Naive thymus-derived CD4-positive, alpha-beta T cell (primary cell): ENCODE measurements at regions of chr16 and their contacts with region 1.

Region 1: DNA sequence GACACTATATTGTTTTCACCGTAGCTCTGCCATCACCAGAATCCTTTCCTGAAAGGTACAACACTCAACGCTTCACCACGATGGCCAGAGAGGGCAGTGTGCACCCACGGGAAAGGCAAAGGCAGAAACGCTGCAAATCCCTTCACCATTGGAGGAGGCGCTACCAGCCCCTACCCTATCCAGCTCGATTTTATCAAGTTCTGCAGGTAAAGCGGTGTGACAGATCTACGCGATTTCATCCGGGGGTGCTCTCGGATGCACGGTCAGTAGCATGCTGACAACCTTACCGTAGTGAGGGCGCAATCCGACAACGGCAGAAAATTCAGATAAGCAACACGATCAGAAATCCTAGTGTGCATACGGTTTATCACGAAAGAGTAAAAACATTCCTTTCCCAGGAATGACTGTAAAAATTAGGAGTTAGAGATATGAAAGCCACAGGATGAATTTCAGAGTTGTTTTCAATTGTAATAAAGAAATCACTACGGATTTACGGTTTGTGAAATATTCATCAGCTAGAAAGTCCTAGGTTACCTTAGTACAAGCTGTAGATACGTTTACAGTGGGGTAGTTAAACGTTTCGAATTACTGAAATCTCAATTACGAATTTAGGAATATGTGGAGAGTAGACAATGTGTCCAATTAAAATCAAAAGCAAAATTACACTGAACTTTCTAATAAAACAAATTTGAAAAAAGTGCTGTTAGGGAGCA is 1.8 kb downstream of the NETO2 start:
- DNase-seq: peak; percentile 53 to 83 (median 75)
- ATAC-seq: peak; percentile 86
- H3K4me3 ChIP-seq: peak overlapping the region; percentile 30
- H3K4me3 Mint-ChIP-seq: peak overlapping the region; percentile 72 to 89 (median 84)
- H3K27ac ChIP-seq: no peak overlapping the region
- H3K27ac Mint-ChIP-seq: peak overlapping the region in 2 of 9 donors; percentile 14 to 77
- H3K4me1 ChIP-seq: peaks cover 10 to 15% of the 10 kb centered on the region in 2 donors
- H3K4me1 Mint-ChIP-seq: peaks cover 12 to 29% (median 17%) of the 10 kb centered on the region in 7 donors
- H3K27me3 ChIP-seq: peaks cover 0 to 12% of the 10 kb centered on the region in 2 donors
- H3K27me3 Mint-ChIP-seq: peaks cover 22 to 37% (median 34%) of the 10 kb centered on the region in 5 donors

Region 2: GRCh38 chr16:46830902-46831647 is 310.9 kb before region 1 on chr16 and contains the start of gene C16orf87:
- CTCF ChIA-PET with region 1: no interaction called
- POLR2A ChIA-PET with region 1: no interaction called
- intact Hi-C with region 1: loop called in 1 of 2 experiments (anchors 5 kb)
- DNase-seq: peak; percentile 88 to 95 (median 91)
- ATAC-seq: peak; percentile 96
- H3K4me3 ChIP-seq: peak within 1 kb of the TSS; percentile 46
- H3K4me3 Mint-ChIP-seq: peak within 1 kb of the TSS; percentile 94 to 99 (median 96)
- H3K27ac ChIP-seq: peak within 1 kb of the TSS; percentile 81
- H3K27ac Mint-ChIP-seq: peak within 1 kb of the TSS; percentile 90 to 98 (median 95)
- H3K4me1 ChIP-seq: peaks cover 9 to 12% of the 10 kb centered on the region in 2 donors
- H3K4me1 Mint-ChIP-seq: peaks cover 21 to 35% (median 29%) of the 10 kb centered on the region in 7 donors
- H3K27me3 ChIP-seq: no peaks in the 10 kb centered on the region
- H3K27me3 Mint-ChIP-seq: peaks cover 0 to 21% (median 0%) of the 10 kb centered on the region in 5 donors
- total RNA-seq, gene C16orf87: 5.6 to 14.0 (median 12.7) TPM

Region 3: GRCh38 chr16:46896314-46896968 is 245.5 kb before region 1 on chr16:
- CTCF ChIA-PET with region 1: no interaction called
- POLR2A ChIA-PET with region 1: no interaction called
- intact Hi-C with region 1: no loop called
- DNase-seq: no peak
- ATAC-seq: no peak
- H3K4me3 ChIP-seq: no peak overlapping the region
- H3K4me3 Mint-ChIP-seq: no peak overlapping the region
- H3K27ac ChIP-seq: no peak overlapping the region
- H3K27ac Mint-ChIP-seq: no peak overlapping the region
- H3K4me1 ChIP-seq: no peaks in the 10 kb centered on the region
- H3K4me1 Mint-ChIP-seq: peaks cover 0 to 3% (median 0%) of the 10 kb centered on the region in 7 donors
- H3K27me3 ChIP-seq: no peaks in the 10 kb centered on the region
- H3K27me3 Mint-ChIP-seq: peaks cover 0 to 4% (median 0%) of the 10 kb centered on the region in 5 donors

Region 4: GRCh38 chr16:47065766-47066688 is 75.9 kb before region 1 on chr16:
- CTCF ChIA-PET with region 1: no interaction called
- POLR2A ChIA-PET with region 1: no interaction called
- intact Hi-C with region 1: loop called in 1 of 2 experiments (anchors 5 kb)
- DNase-seq: no peak
- ATAC-seq: no peak
- H3K4me3 ChIP-seq: no peak overlapping the region
- H3K4me3 Mint-ChIP-seq: no peak overlapping the region
- H3K27ac ChIP-seq: no peak overlapping the region
- H3K27ac Mint-ChIP-seq: no peak overlapping the region
- H3K4me1 ChIP-seq: no peaks in the 10 kb centered on the region
- H3K4me1 Mint-ChIP-seq: peaks cover 0 to 16% (median 5%) of the 10 kb centered on the region in 7 donors
- H3K27me3 ChIP-seq: no peaks in the 10 kb centered on the region
- H3K27me3 Mint-ChIP-seq: peaks cover 0 to 10% (median 6%) of the 10 kb centered on the region in 5 donors

Region 5: DNA sequence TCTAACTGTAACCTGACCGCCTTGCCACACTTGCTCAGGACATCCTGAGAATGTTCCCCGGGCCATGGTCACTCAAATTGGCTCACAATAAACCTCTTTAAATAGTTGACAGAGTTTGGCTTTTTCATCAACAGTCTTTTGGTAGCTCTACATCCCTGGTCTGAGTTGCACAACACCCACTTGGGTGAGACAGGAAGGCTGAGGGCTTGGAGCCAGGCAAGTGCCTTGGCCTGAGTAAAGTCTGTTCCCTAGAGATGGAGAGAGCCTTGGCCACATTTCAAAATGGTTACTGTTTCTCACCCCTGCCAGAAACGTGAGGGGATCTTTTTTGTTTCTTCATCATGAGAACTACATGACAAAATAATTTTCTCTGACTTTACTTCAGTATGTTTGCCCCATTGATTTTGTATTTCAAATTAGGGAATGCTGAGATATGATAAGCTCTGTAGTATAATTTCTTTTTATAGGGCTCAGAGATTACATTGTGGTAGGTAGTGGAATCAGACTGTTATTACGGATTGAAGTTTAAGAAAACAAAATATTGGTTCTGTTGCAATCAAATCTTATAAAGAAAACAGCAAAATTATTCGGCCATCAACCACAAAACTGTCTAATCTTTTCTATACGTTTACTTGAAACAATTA is 55.7 kb after region 1 on chr16:
- CTCF ChIA-PET with region 1: no interaction called
- POLR2A ChIA-PET with region 1: no interaction called
- intact Hi-C with region 1: no loop called
- DNase-seq: no peak
- ATAC-seq: no peak
- H3K4me3 ChIP-seq: no peak overlapping the region
- H3K4me3 Mint-ChIP-seq: no peak overlapping the region
- H3K27ac ChIP-seq: no peak overlapping the region
- H3K27ac Mint-ChIP-seq: no peak overlapping the region
- H3K4me1 ChIP-seq: no peaks in the 10 kb centered on the region
- H3K4me1 Mint-ChIP-seq: peaks cover 0 to 2% (median 0%) of the 10 kb centered on the region in 7 donors
- H3K27me3 ChIP-seq: no peaks in the 10 kb centered on the region
- H3K27me3 Mint-ChIP-seq: no peaks in the 10 kb centered on the region

Region 6: GRCh38 chr16:47732523-47733111 is 590.7 kb after region 1 on chr16:
- CTCF ChIA-PET with region 1: interaction called, 3 read pairs
- POLR2A ChIA-PET with region 1: no interaction called
- intact Hi-C with region 1: loop called in 1 of 2 experiments (anchors 5 kb)
- DNase-seq: peak in 1 of 9 donors; percentile 28
- ATAC-seq: no peak
- H3K4me3 ChIP-seq: no peak overlapping the region
- H3K4me3 Mint-ChIP-seq: peak overlapping the region in 1 of 10 donors; percentile 44
- H3K27ac ChIP-seq: no peak overlapping the region
- H3K27ac Mint-ChIP-seq: peak overlapping the region in 1 of 9 donors; percentile 76
- H3K4me1 ChIP-seq: no peaks in the 10 kb centered on the region
- H3K4me1 Mint-ChIP-seq: peaks cover 0 to 27% (median 0%) of the 10 kb centered on the region in 7 donors
- H3K27me3 ChIP-seq: no peaks in the 10 kb centered on the region
- H3K27me3 Mint-ChIP-seq: peaks cover 2 to 29% (median 9%) of the 10 kb centered on the region in 5 donors

Region 7: GRCh38 chr16:48156790-48157209 is 1014.9 kb after region 1 on chr16:
- CTCF ChIA-PET with region 1: interaction called, 5 read pairs
- POLR2A ChIA-PET with region 1: no interaction called
- intact Hi-C with region 1: loop called (anchors 1 kb)
- DNase-seq: peak; percentile 33 to 89 (median 69)
- ATAC-seq: peak; percentile 88
- H3K4me3 ChIP-seq: no peak overlapping the region
- H3K4me3 Mint-ChIP-seq: no peak overlapping the region
- H3K27ac ChIP-seq: no peak overlapping the region
- H3K27ac Mint-ChIP-seq: no peak overlapping the region
- H3K4me1 ChIP-seq: no peaks in the 10 kb centered on the region
- H3K4me1 Mint-ChIP-seq: peaks cover 0 to 23% (median 0%) of the 10 kb centered on the region in 7 donors
- H3K27me3 ChIP-seq: no peaks in the 10 kb centered on the region
- H3K27me3 Mint-ChIP-seq: peaks cover 0 to 41% (median 9%) of the 10 kb centered on the region in 5 donors

Region 8: GRCh38 chr16:48385272-48386150 is 1243.6 kb after region 1 on chr16 and contains the start of gene SIAH1:
- CTCF ChIA-PET with region 1: no interaction called
- POLR2A ChIA-PET with region 1: no interaction called
- intact Hi-C with region 1: loop called in 1 of 2 experiments (anchors 5 kb)
- DNase-seq: peak; percentile 79 to 95 (median 89)
- ATAC-seq: peak; percentile 95
- H3K4me3 ChIP-seq: peak within 1 kb of the TSS; percentile 88
- H3K4me3 Mint-ChIP-seq: peak within 1 kb of the TSS; percentile 90 to 98 (median 94)
- H3K27ac ChIP-seq: peak within 1 kb of the TSS; percentile 94
- H3K27ac Mint-ChIP-seq: peak within 1 kb of the TSS; percentile 80 to 97 (median 94)
- H3K4me1 ChIP-seq: peaks cover 12 to 16% of the 10 kb centered on the region in 2 donors
- H3K4me1 Mint-ChIP-seq: peaks cover 18 to 39% (median 31%) of the 10 kb centered on the region in 7 donors
- H3K27me3 ChIP-seq: no peaks in the 10 kb centered on the region
- H3K27me3 Mint-ChIP-seq: peaks cover 0 to 5% (median 0%) of the 10 kb centered on the region in 5 donors
- total RNA-seq, gene SIAH1: 14.5 to 51.1 (median 19.8) TPM